Heart left ventricle (tissue), 16 donors: ENCODE measurements at regions of chr2 and their contacts with region 1.

Region 1: DNA sequence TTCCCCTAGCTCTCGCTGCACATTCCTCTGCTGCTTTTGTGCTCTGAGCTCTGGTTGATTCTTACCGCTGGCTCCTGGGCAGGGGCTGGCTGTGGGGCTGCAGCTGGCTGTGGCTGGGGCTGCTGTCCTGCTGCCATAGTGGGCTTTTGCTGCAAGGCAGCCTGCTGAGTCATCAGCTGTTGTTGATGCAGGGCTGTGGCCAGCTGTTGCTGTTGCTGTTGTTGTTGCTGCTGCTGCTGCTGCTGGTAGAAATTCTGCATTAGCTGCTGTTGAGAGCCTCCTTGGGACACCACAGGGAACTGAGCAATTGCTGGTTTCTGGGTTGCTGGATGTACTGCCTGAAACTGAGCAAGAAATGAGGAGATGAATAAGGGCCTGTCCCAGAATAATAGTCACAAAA is 77.2 kb upstream of the NFU1 start:
- DNase-seq: peak in 3 of 5 donors; percentile 38 to 76 (median 59)
- ATAC-seq: peak in 3 of 4 donors; percentile 46 to 56 (median 50)
- H3K4me3 ChIP-seq: no peak overlapping the region
- H3K27ac ChIP-seq: no peak overlapping the region
- H3K4me1 ChIP-seq: peaks cover 0 to 37% (median 8%) of the 10 kb centered on the region in 12 donors
- H3K27me3 ChIP-seq: no peaks in the 10 kb centered on the region
- CTCF ChIP-seq: peak in 1 of 12 donors; percentile 25
- POLR2A ChIP-seq: no peak

Region 2: GRCh38 chr2:69375494-69376353 is 138.7 kb before region 1 on chr2:
- intact Hi-C with region 1: loop called in 1 of 10 experiments (anchors 10 kb)
- DNase-seq: no peak
- ATAC-seq: peak; percentile 40 to 72 (median 71)
- H3K4me3 ChIP-seq: no peak overlapping the region
- H3K27ac ChIP-seq: no peak overlapping the region
- H3K4me1 ChIP-seq: peaks cover 0 to 17% (median 6%) of the 10 kb centered on the region in 12 donors
- H3K27me3 ChIP-seq: no peaks in the 10 kb centered on the region
- CTCF ChIP-seq: peak; percentile 54 to 71 (median 60)
- POLR2A ChIP-seq: no peak